Gastrocnemius medialis (tissue), 4 donors: ENCODE measurements at regions of chr2 and their contacts with region 1.

Region 1: GRCh38 chr2:173218326-173219056 is 136.2 kb upstream of the CDCA7 start:
- DNase-seq: no peak
- ATAC-seq: no peak
- H3K4me3 ChIP-seq: no peak overlapping the region
- H3K27ac ChIP-seq: peak overlapping the region; percentile 83 to 91 (median 88)
- H3K4me1 ChIP-seq: peaks cover 37 to 38% of the 10 kb centered on the region in 2 donors
- H3K27me3 ChIP-seq: no peaks in the 10 kb centered on the region
- CTCF ChIP-seq: no peak
- POLR2A ChIP-seq: no peak

Region 2: GRCh38 chr2:172977270-172978062 is 241.0 kb before region 1 on chr2:
- in situ Hi-C with region 1: no loop called
- intact Hi-C with region 1: loop called (anchors 5 kb)
- DNase-seq: peak in 1 of 2 donors; percentile 36
- ATAC-seq: peak; percentile 81 to 84
- H3K4me3 ChIP-seq: no peak overlapping the region
- H3K27ac ChIP-seq: no peak overlapping the region
- H3K4me1 ChIP-seq: peaks cover 0 to 7% of the 10 kb centered on the region in 2 donors
- H3K27me3 ChIP-seq: no peaks in the 10 kb centered on the region
- CTCF ChIP-seq: peak; percentile 26 to 62 (median 55)
- POLR2A ChIP-seq: no peak

Region 3: DNA sequence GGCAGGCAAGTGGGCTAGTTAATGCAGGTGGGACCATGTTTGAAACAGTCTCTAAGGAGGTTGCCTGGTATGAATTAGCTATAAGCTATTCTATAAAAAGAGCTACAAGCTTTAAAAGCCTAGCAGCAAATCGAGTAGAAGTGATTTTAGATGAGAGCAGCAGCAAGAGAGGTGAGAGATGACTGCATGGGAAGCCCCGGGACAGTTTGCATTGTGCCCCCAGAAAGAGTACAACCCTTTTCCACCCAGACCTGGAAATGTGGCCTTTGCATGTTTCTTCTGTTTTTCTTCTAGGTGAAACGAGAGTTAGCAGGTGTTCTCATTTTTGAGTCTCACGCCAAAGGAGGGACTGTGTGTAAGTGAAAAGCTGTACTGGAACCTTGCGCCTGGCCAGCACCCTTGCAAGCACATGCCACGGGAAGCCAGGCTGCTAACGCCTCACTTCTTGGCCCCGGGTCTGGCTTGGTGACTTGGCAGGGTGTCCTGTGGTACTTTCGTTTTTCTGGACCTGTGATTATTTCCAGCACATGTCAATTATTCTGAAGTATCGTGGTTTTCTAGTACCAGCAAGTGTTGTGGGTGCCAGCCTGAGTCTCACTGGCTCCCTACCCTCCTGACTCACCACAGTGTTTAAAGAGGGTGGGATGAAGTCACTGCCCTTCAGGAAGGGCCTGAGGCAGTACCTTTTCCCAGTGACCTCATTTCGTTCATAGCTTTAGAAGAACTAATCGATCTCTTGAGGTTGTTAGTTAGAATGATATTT is 233.2 kb before region 1 on chr2:
- in situ Hi-C with region 1: no loop called
- intact Hi-C with region 1: loop called (anchors 5 kb)
- DNase-seq: peak; percentile 52 to 62
- ATAC-seq: peak; percentile 91 to 92
- H3K4me3 ChIP-seq: peak overlapping the region; percentile 28 to 34 (median 30)
- H3K27ac ChIP-seq: peak overlapping the region; percentile 68 to 79 (median 73)
- H3K4me1 ChIP-seq: peaks cover 15 to 19% of the 10 kb centered on the region in 2 donors
- H3K27me3 ChIP-seq: no peaks in the 10 kb centered on the region
- CTCF ChIP-seq: no peak
- POLR2A ChIP-seq: peak in 1 of 2 donors; percentile 21

Region 4: GRCh38 chr2:173239644-173240043 is 21.2 kb after region 1 on chr2:
- in situ Hi-C with region 1: no loop called
- intact Hi-C with region 1: no loop called
- DNase-seq: no peak
- ATAC-seq: no peak
- H3K4me3 ChIP-seq: no peak overlapping the region
- H3K27ac ChIP-seq: no peak overlapping the region
- H3K4me1 ChIP-seq: no peaks in the 10 kb centered on the region
- H3K27me3 ChIP-seq: no peaks in the 10 kb centered on the region
- CTCF ChIP-seq: no peak
- POLR2A ChIP-seq: no peak

Region 5: DNA sequence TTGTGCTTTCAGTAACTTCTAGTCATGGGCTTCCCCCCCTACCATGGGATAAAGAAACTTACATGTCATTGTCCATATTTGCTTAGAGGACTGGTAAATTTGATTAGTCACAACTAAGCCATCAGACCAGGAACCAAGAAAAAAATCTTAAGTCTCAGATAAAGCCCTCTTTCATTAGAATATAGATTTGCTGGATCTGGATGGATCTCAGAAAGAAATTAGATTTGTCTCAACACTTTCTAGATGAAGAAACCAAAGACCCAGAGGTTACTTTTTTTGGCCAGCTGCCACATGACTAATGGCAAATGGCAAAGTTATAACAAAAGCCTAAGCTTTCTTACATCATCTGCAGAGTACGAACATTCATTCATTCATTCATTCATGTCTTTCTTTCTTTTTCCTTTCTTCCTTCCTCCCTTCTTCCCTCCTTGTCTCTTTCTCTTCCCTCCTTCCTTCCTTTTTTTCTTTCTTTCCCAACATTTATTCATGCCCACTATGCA is 196.4 kb after region 1 on chr2:
- in situ Hi-C with region 1: no loop called
- intact Hi-C with region 1: loop called (anchors 5 kb)
- DNase-seq: no peak
- ATAC-seq: no peak
- H3K4me3 ChIP-seq: no peak overlapping the region
- H3K27ac ChIP-seq: no peak overlapping the region
- H3K4me1 ChIP-seq: peaks cover 19 to 23% of the 10 kb centered on the region in 2 donors
- H3K27me3 ChIP-seq: no peaks in the 10 kb centered on the region
- CTCF ChIP-seq: no peak
- POLR2A ChIP-seq: no peak